ENCODE measurements at regions of chr1 and their contacts with region 1.

Region 1: DNA sequence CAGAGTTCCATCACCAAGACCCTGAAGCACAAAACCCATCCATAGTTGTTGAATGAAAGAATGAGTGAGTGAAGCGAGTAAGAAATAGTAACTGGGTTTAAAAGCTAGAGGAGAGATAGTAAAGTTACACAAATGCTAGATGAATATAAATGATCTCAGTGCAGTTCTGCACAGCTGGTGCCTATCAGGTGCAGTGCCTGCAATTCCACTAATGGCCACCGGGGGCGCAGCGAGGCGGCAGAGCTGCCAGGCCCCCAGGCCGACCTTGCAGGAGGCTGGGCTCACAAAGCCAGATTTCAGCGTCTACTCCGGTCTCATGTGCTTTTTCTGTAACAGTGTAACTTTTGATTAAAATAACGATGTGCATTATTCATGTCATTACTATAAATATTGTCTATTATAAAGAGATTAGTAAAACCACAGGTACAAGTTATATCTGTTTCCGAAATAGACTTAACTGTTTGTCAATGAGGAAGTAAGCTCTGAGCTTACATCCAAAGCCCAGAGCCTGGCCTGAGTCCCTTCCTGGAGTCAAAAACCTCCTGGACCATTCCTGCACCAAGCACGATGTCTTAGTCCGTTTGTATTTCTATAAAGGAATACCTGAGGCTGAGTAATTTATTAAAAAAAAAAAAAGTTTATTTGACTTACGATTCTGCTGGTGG is 477.6 kb downstream of the NPHP4 start:
- DNase-seq: peak; percentile 46
- ATAC-seq: peak; percentile 87
- H3K4me3 ChIP-seq: no peak overlapping the region
- H3K27ac ChIP-seq: no peak overlapping the region
- H3K4me1 ChIP-seq: no peaks in the 10 kb centered on the region
- H3K27me3 ChIP-seq: peaks cover 8% of the 10 kb centered on the region
- CTCF ChIP-seq: peak; percentile 100

Region 2: GRCh38 chr1:5481889-5482288 is 32.8 kb before region 1 on chr1:
- CTCF ChIA-PET with region 1: no interaction called
- POLR2A ChIA-PET with region 1: no interaction called
- in situ Hi-C with region 1: no loop called
- intact Hi-C with region 1: no loop called
- DNase-seq: no peak
- ATAC-seq: no peak
- H3K4me3 ChIP-seq: no peak overlapping the region
- H3K27ac ChIP-seq: no peak overlapping the region
- H3K4me1 ChIP-seq: no peaks in the 10 kb centered on the region
- H3K27me3 ChIP-seq: peaks cover 8% of the 10 kb centered on the region; the same call in 1 of the 2 replicates
- CTCF ChIP-seq: no peak

Region 3: GRCh38 chr1:5565281-5566125 is 50.9 kb after region 1 on chr1:
- CTCF ChIA-PET with region 1: no interaction called
- POLR2A ChIA-PET with region 1: no interaction called
- in situ Hi-C with region 1: no loop called
- intact Hi-C with region 1: no loop called
- DNase-seq: no peak
- ATAC-seq: no peak
- H3K4me3 ChIP-seq: no peak overlapping the region
- H3K27ac ChIP-seq: no peak overlapping the region
- H3K4me1 ChIP-seq: no peaks in the 10 kb centered on the region
- H3K27me3 ChIP-seq: no peaks in the 10 kb centered on the region
- CTCF ChIP-seq: no peak

Region 4: GRCh38 chr1:5620990-5621389 is 106.3 kb after region 1 on chr1:
- CTCF ChIA-PET with region 1: no interaction called
- POLR2A ChIA-PET with region 1: no interaction called
- in situ Hi-C with region 1: no loop called
- intact Hi-C with region 1: loop called (anchors 5 kb)
- DNase-seq: no peak
- ATAC-seq: peak; percentile 78
- H3K4me3 ChIP-seq: no peak overlapping the region
- H3K27ac ChIP-seq: no peak overlapping the region
- H3K4me1 ChIP-seq: no peaks in the 10 kb centered on the region
- H3K27me3 ChIP-seq: peaks cover 3% of the 10 kb centered on the region; the same call in 1 of the 2 replicates
- CTCF ChIP-seq: peak; percentile 74

Region 5: GRCh38 chr1:5651964-5652821 is 137.5 kb after region 1 on chr1:
- CTCF ChIA-PET with region 1: no interaction called
- POLR2A ChIA-PET with region 1: no interaction called
- in situ Hi-C with region 1: no loop called
- intact Hi-C with region 1: no loop called
- DNase-seq: no peak
- ATAC-seq: peak; percentile 56; the same call in 1 of the 2 replicates
- H3K4me3 ChIP-seq: no peak overlapping the region
- H3K27ac ChIP-seq: no peak overlapping the region
- H3K4me1 ChIP-seq: no peaks in the 10 kb centered on the region
- H3K27me3 ChIP-seq: no peaks in the 10 kb centered on the region; the same call in none of the 2 replicates
- CTCF ChIP-seq: no peak

Region 6: GRCh38 chr1:5745776-5746610 is 231.3 kb after region 1 on chr1:
- CTCF ChIA-PET with region 1: interaction called, 5 read pairs
- POLR2A ChIA-PET with region 1: no interaction called
- in situ Hi-C with region 1: no loop called
- intact Hi-C with region 1: loop called (anchors 2 kb)
- DNase-seq: peak; percentile 27
- ATAC-seq: peak; percentile 92
- H3K4me3 ChIP-seq: no peak overlapping the region
- H3K27ac ChIP-seq: no peak overlapping the region
- H3K4me1 ChIP-seq: peaks cover 2% of the 10 kb centered on the region; the same call in 1 of the 2 replicates
- H3K27me3 ChIP-seq: peaks cover 3% of the 10 kb centered on the region; the same call in 1 of the 2 replicates
- CTCF ChIP-seq: peak; percentile 99

Region 7: DNA sequence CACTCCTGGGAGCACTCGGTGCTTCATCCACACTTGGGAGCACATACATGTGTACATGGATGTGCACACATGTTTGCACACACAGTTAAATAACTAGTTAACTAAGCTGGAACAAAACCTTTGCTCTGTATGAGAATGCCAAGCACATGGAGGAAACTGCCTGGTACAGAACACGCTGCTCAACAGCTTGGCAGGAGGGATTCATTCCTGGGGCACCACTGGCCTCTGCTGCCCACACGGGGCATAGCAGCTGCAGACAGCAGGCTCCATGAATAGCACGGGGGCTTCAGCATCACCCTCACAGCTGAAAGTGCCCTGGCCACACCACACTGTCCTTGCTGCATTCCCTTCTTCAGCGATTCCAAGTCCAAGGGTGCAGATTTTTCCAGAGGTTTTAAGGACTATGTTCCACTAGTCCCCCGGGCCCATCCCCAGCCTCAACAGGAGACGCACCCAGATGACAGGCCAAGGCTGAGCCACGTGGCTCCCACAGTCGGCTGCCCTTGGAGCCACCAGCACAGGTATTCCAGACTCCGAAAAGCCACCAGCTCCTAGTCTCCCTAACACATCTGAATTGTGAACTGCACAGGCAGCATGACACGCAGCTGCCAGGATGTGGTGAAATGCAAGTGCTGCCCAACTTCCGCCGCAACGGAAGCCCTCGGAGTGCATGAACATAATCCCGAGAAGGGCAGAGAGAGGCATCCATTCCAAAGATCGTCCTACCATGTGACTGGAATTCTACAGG is 460.7 kb after region 1 on chr1:
- CTCF ChIA-PET with region 1: no interaction called
- POLR2A ChIA-PET with region 1: no interaction called
- in situ Hi-C with region 1: no loop called
- intact Hi-C with region 1: loop called (anchors 10 kb)
- DNase-seq: no peak
- ATAC-seq: peak; percentile 66
- H3K4me3 ChIP-seq: no peak overlapping the region
- H3K27ac ChIP-seq: no peak overlapping the region
- H3K4me1 ChIP-seq: no peaks in the 10 kb centered on the region
- H3K27me3 ChIP-seq: no peaks in the 10 kb centered on the region
- CTCF ChIP-seq: peak; percentile 76; the same call in 1 of the 2 replicates

Measured in Panc1 (cell line).